Right ventricle myocardium superior (tissue), 1 donor: ENCODE measurements at regions of chr20 and their contacts with region 1.

Region 1: GRCh38 chr20:62065669-62066338 is at the start of gene TAF4:
- DNase-seq: peak; percentile 86
- ATAC-seq: peak; percentile 66
- total RNA-seq, gene TAF4: 11.6 TPM

Region 2: GRCh38 chr20:61998343-61999121 is 67.3 kb before region 1 on chr20:
- intact Hi-C with region 1: no loop called
- DNase-seq: no peak
- ATAC-seq: no peak

Region 3: DNA sequence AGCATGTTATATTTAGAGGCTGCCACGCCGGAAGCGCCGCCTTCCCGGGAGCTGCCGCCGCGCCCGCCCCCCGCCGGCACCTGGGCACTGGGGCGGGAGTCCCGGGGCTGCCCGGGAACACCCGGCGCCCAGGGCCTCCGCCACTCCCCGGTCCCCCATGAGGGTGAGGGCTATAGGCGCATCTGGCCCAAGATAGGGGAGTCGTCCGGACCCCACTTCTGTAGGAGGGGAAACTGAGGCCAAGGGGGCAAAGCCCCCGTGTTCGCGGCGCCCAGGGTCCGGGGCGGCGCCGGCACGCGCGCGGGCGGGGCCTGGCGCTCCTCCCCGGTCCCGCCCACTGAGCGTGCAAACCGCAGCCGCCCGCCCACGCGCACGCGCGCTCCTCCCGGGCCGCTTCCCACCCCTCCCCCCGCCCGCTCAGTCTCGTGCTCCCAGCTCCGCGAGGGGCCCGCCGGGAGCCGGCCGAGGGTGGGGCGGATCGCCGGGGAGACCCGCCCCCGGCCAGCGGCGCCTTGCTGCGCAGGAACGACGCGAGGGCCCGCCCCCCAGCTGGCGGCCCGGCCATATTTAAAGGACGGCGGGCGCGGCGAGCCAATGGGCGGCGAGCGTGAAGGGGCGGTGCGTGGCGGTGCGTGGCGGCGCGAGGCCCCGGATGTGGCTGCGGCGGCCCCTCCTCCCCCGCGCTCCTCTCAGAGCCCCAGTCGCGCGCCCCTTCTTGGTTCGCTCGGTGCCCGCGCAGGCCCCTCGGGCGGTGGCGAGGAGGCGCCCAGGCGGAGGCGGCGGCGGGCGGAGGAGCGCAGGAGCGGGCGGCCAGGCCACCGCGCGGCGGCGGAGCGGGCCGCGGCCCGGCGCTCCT is 56.2 kb after region 1 on chr20 and contains the start of gene LSM14B:
- intact Hi-C with region 1: loop called (anchors 5 kb)
- DNase-seq: peak; percentile 97
- ATAC-seq: peak; percentile 90
- total RNA-seq, gene LSM14B: 51.7 TPM

Region 4: GRCh38 chr20:62136283-62137091 is 70.7 kb after region 1 on chr20:
- intact Hi-C with region 1: loop called (anchors 5 kb)
- DNase-seq: peak; percentile 83
- ATAC-seq: peak; percentile 32